Right ventricle myocardium inferior (tissue), 1 donor: ENCODE measurements at regions of chr4 and their contacts with region 1.

Region 1: GRCh38 chr4:73019462-73020047 is 50.0 kb downstream of the COX18 start:
- DNase-seq: no peak
- ATAC-seq: no peak

Region 2: GRCh38 chr4:72505314-72505744 is 514.2 kb before region 1 on chr4:
- intact Hi-C with region 1: loop called (anchors 5 kb)
- DNase-seq: no peak
- ATAC-seq: peak; percentile 73

Region 3: GRCh38 chr4:72701987-72702819 is 317.4 kb before region 1 on chr4:
- intact Hi-C with region 1: loop called (anchors 5 kb)
- DNase-seq: no peak
- ATAC-seq: no peak

Region 4: GRCh38 chr4:72935462-72935861 is 84.1 kb before region 1 on chr4:
- intact Hi-C with region 1: no loop called
- DNase-seq: no peak
- ATAC-seq: no peak